PC-9 (cell line): ENCODE measurements at regions of chr19 and their contacts with region 1.

Region 1: GRCh38 chr19:41746593-41747227 is 8.6 kb upstream of the CEACAM6 start:
- DNase-seq: peak; percentile 57 to 75
- H3K4me3 ChIP-seq: no peak overlapping the region
- H3K27ac ChIP-seq: 0 out of 2 replicates have a peak overlapping the region, but pooled peaks have one; percentile 7
- H3K4me1 ChIP-seq: peaks cover 64% of the 10 kb centered on the region
- H3K27me3 ChIP-seq: no peaks in the 10 kb centered on the region
- CTCF ChIP-seq: peak; percentile 83

Region 2: GRCh38 chr19:41597600-41598041 is 149.1 kb before region 1 on chr19:
- CTCF ChIA-PET with region 1: no interaction called
- POLR2A ChIA-PET with region 1: no interaction called
- intact Hi-C with region 1: loop called (anchors 5 kb)
- DNase-seq: peak; percentile 51 to 60
- H3K4me3 ChIP-seq: no peak overlapping the region
- H3K27ac ChIP-seq: no peak overlapping the region
- H3K4me1 ChIP-seq: no peaks in the 10 kb centered on the region
- H3K27me3 ChIP-seq: peaks cover 21% of the 10 kb centered on the region
- CTCF ChIP-seq: peak; percentile 97

Region 3: GRCh38 chr19:41706741-41707501 is 39.8 kb before region 1 on chr19:
- CTCF ChIA-PET with region 1: interaction called, 7 read pairs
- POLR2A ChIA-PET with region 1: no interaction called
- intact Hi-C with region 1: loop called (anchors 1 kb)
- DNase-seq: peak; percentile 69 to 81
- H3K4me3 ChIP-seq: peak overlapping the region; percentile 60; the same call in 1 of the 2 replicates
- H3K27ac ChIP-seq: no peak overlapping the region
- H3K4me1 ChIP-seq: peaks cover 18% of the 10 kb centered on the region
- H3K27me3 ChIP-seq: no peaks in the 10 kb centered on the region
- CTCF ChIP-seq: peak; percentile 99

Region 4: DNA sequence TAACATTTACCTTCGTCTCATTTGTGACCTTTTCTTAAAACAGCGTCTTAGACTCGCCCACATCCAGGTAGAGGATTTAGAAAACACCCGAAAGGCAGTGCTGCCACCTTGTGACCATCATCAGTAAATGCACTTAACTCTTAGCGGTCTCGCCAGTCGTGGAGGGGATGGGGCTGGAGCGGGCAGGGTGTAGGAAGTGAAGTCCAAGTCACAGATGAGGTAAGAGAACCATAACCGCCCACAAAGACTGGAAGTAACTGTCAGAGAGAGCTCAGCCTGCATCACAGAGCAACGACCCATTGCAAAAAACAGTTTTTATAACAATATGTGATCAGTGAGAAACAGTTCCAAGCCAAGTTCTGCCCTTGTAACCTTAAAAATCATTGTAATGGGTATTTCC is 38.9 kb after region 1 on chr19:
- CTCF ChIA-PET with region 1: interaction called, 3 read pairs
- POLR2A ChIA-PET with region 1: no interaction called
- intact Hi-C with region 1: loop called (anchors 2 kb)
- DNase-seq: peak; percentile 77 to 79
- H3K4me3 ChIP-seq: no peak overlapping the region
- H3K27ac ChIP-seq: peak overlapping the region; percentile 51
- H3K4me1 ChIP-seq: peaks cover 56% of the 10 kb centered on the region
- H3K27me3 ChIP-seq: no peaks in the 10 kb centered on the region
- CTCF ChIP-seq: peak; percentile 92

Region 5: DNA sequence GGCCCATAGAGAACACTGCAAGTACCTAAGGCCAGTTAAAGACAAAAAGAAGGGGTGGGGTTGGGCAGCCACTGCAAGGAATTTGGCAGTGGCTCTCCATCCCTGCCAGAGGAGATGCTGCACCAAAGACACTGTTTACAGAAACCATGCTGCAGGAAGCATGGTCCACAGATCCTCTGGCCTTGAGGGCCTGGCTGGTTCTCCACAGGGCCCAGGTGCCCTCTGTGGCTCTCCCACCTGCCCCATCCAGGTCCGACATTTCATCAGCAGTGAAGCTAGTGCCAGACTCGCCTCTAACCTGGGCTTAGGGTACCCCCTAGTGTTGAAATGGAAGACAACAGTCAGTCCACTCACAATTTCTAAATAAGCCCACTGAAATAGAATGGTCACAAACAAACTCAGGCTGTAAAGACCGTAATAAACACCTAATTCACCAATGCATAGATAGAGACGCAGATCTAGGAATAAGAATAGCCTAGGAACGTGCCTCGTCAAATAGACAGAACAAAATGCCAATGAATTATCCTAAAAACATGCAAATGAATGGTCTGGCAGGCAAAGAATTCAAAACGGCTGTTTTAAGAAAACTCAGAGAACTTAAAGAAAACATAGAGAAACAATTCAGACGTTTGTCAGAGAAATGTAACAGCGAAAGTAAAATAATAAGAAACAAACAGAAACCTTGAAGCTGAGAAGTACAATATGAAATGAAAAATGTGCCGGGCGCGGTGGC is 74.5 kb after region 1 on chr19:
- CTCF ChIA-PET with region 1: no interaction called
- POLR2A ChIA-PET with region 1: no interaction called
- intact Hi-C with region 1: loop called (anchors 2 kb)
- DNase-seq: peak; percentile 45 to 47
- H3K4me3 ChIP-seq: no peak overlapping the region
- H3K27ac ChIP-seq: no peak overlapping the region
- H3K4me1 ChIP-seq: no peaks in the 10 kb centered on the region
- H3K27me3 ChIP-seq: 0 out of 2 replicates have a peak, but pooled peaks cover 5% of the 10 kb centered on the region
- CTCF ChIP-seq: peak; percentile 87

Region 6: DNA sequence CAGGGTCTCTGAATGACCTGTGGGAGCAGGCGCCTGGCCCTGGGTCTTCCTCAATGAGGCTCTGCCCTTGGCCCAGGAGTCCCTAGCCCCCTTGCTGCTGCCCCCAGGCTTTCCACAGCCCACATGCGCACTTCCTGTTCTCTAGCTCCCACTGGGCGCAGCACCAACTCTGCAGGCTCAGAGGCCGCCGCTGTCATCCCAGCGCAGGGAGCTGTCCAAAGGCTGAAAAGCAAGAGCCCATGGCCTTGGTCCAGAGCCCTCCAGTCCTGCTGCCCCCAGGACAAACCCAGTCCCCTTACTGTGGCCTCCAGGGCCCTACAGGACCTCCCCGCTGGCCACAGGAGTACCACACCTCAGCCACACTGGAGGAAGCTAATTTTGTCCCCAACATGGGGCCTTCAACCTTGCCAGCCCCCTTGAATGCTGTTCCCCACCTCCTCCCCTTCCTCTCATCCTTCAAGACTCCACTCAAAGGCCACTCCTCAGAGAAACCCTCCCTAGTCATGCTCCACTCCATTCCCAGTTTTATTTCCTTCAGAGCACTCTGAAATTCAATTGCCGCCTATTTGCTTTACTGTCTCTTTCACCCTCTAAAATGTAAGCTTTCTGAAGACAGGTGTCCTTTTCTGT is 393.5 kb after region 1 on chr19:
- CTCF ChIA-PET with region 1: no interaction called
- POLR2A ChIA-PET with region 1: no interaction called
- intact Hi-C with region 1: no loop called
- DNase-seq: peak in 1 of 2 experiments; percentile 56
- H3K4me3 ChIP-seq: no peak overlapping the region
- H3K27ac ChIP-seq: no peak overlapping the region
- H3K4me1 ChIP-seq: no peaks in the 10 kb centered on the region
- H3K27me3 ChIP-seq: peaks cover 13% of the 10 kb centered on the region
- CTCF ChIP-seq: no peak